GM12878 (cell line): ENCODE measurements at regions of chrX and their contacts with region 1.

Region 1: GRCh38 chrX:48539345-48540027 is at the start of gene TBC1D25:
- DNase-seq: peak; percentile 92
- ATAC-seq: peak; percentile 83
- H3K4me3 ChIP-seq: peak within 1 kb of the TSS; percentile 73
- H3K27ac ChIP-seq: peak within 1 kb of the TSS; percentile 81
- H3K4me1 ChIP-seq: no peaks in the 10 kb centered on the region
- H3K27me3 ChIP-seq: no peaks in the 10 kb centered on the region
- CTCF ChIP-seq: peak; percentile 27 to 37 (median 28); a peak in 4 of 6 replicates
- EP300 ChIP-seq: peak in 1 of 2 experiments; percentile 67; a peak in 1 of 4 replicates
- POLR2A ChIP-seq: peak; percentile 78
- RAD21 ChIP-seq: no peak
- polyA plus RNA-seq, gene TBC1D25: 0.79 to 2.3 TPM

Region 2: GRCh38 chrX:48574270-48575266 is 35.1 kb after region 1 on chrX and contains the start of gene RBM3:
- CTCF ChIA-PET with region 1: interaction called, 7 read pairs
- POLR2A ChIA-PET with region 1: interaction called, 10 read pairs
- RAD21 ChIA-PET with region 1: interaction called, 9 read pairs
- SMC1A ChIA-PET with region 1: interaction called, 10 read pairs
- in situ Hi-C with region 1: no loop called
- intact Hi-C with region 1: loop called (anchors 1 kb)
- DNase-seq: peak; percentile 83
- ATAC-seq: peak; percentile 90
- H3K4me3 ChIP-seq: peak within 1 kb of the TSS; percentile 75
- H3K27ac ChIP-seq: peak within 1 kb of the TSS; percentile 98
- H3K4me1 ChIP-seq: peaks cover 12% of the 10 kb centered on the region
- H3K27me3 ChIP-seq: no peaks in the 10 kb centered on the region
- CTCF ChIP-seq: peak; percentile 20 to 42 (median 33); a peak in 5 of 6 replicates
- EP300 ChIP-seq: no peak
- POLR2A ChIP-seq: peak; percentile 94
- RAD21 ChIP-seq: no peak
- polyA plus RNA-seq, gene RBM3: 170 to 179 TPM